Dorsolateral prefrontal cortex (tissue), 120 donors: ENCODE measurements at regions of chr17 and their contacts with region 1.

Region 1: GRCh38 chr17:42832974-42833766 is at the start of gene PSME3:
- DNase-seq: peak; percentile 87 to 95 (median 91)
- H3K4me3 ChIP-seq: peak within 1 kb of the TSS; percentile 71 to 100 (median 96)
- H3K27ac ChIP-seq: peak within 1 kb of the TSS; percentile 47 to 96 (median 86)
- H3K27me3 ChIP-seq: no peaks in the 10 kb centered on the region
- CTCF ChIP-seq: peak in 35 of 56 donors; percentile 3 to 67 (median 30)
- total RNA-seq, gene PSME3: 55.1 to 109 (median 84.1) TPM

Region 2: GRCh38 chr17:42798383-42799380 is 34.5 kb before region 1 on chr17 and contains the starts of genes CNTD1 and COA3:
- intact Hi-C with region 1: loop called in 1 of 2 experiments (anchors 2 kb)
- DNase-seq: peak; percentile 75 to 92 (median 88)
- H3K4me3 ChIP-seq: peak within 1 kb of the TSS; percentile 68 to 99 (median 92)
- H3K27ac ChIP-seq: peak within 1 kb of the TSS in 53 of 59 donors; percentile 9 to 89 (median 70)
- H3K27me3 ChIP-seq: no peaks in the 10 kb centered on the region
- CTCF ChIP-seq: peak in 25 of 56 donors; percentile 12 to 46 (median 26)
- total RNA-seq, gene CNTD1: 0.47 to 5.7 (median 1.9) TPM
- total RNA-seq, gene COA3: 45.3 to 97.2 (median 69.2) TPM

Region 3: GRCh38 chr17:42819944-42820535 is 13.1 kb before region 1 on chr17:
- intact Hi-C with region 1: loop called in 1 of 2 experiments (anchors 1 kb)
- DNase-seq: peak in 1 of 10 donors; percentile 36
- H3K4me3 ChIP-seq: no peak overlapping the region
- H3K27ac ChIP-seq: no peak overlapping the region
- H3K27me3 ChIP-seq: no peaks in the 10 kb centered on the region
- CTCF ChIP-seq: peak in 54 of 56 donors; percentile 16 to 72 (median 49)

Region 4: DNA sequence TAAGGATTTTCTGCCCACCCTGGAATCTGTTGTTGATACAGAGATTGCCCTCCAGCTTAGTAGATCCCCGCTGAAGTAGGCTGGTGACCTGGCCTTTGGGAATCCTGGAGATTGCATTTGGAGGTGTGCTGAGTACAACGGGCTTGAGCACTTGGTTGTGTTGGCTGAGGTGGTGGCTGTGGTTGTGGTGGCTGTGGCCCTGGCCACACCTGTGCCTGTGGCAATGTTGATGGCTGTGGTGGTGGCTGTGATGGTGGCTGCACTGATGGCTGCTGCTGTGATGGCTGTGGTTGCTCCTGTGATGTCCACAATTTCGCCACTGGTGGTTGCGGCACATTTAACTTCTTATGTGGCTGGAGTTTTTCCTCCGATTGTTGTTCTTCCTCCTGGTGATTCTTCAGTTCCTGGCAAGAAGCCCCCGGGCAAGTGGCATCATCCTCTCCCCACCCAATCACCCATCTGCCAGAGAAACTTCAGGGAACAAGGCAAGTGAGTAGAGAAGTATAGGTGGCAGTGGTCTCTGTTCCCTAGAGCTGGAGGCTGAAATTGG is 391.1 kb after region 1 on chr17:
- intact Hi-C with region 1: no loop called
- DNase-seq: no peak
- H3K4me3 ChIP-seq: no peak overlapping the region
- H3K27ac ChIP-seq: no peak overlapping the region
- H3K27me3 ChIP-seq: no peaks in the 10 kb centered on the region
- CTCF ChIP-seq: no peak